Vagina (tissue), 2 donors: ENCODE measurements at regions of chr1 and their contacts with region 1.

Region 1: DNA sequence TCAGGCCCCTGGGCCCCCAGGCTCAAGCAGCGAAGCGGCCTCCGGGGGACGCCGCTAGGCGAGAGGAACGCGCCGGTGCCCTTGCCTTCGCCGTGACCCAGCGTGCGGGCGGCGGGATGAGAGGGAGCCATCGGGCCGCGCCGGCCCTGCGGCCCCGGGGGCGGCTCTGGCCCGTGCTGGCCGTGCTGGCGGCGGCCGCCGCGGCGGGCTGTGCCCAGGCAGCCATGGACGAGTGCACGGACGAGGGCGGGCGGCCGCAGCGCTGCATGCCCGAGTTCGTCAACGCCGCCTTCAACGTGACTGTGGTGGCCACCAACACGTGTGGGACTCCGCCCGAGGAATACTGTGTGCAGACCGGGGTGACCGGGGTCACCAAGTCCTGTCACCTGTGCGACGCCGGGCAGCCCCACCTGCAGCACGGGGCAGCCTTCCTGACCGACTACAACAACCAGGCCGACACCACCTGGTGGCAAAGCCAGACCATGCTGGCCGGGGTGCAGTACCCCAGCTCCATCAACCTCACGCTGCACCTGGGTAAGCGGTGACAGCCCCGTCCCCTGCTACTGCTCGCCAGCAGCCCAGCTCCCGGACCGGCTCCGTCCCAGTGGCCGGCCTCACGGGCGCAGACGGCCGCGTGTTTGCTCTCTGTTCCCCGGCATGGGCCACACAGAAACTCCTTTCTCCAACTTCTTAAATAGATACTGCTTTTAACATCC is 539 bp downstream of the LAMC1 start:
- DNase-seq: no peak
- H3K4me3 ChIP-seq: peak overlapping the region; percentile 83 to 98
- H3K27ac ChIP-seq: peak overlapping the region; percentile 100
- H3K4me1 ChIP-seq: peaks cover 33% of the 10 kb centered on the region
- H3K27me3 ChIP-seq: no peaks in the 10 kb centered on the region
- CTCF ChIP-seq: peak in 2 of 3 experiments; percentile 20 to 36
- POLR2A ChIP-seq: no peak

Region 2: GRCh38 chr1:182984621-182985020 is 39.1 kb before region 1 on chr1:
- intact Hi-C with region 1: no loop called
- DNase-seq: no peak
- H3K4me3 ChIP-seq: no peak overlapping the region
- H3K27ac ChIP-seq: no peak overlapping the region
- H3K4me1 ChIP-seq: no peaks in the 10 kb centered on the region
- H3K27me3 ChIP-seq: no peaks in the 10 kb centered on the region
- CTCF ChIP-seq: no peak
- POLR2A ChIP-seq: no peak

Region 3: DNA sequence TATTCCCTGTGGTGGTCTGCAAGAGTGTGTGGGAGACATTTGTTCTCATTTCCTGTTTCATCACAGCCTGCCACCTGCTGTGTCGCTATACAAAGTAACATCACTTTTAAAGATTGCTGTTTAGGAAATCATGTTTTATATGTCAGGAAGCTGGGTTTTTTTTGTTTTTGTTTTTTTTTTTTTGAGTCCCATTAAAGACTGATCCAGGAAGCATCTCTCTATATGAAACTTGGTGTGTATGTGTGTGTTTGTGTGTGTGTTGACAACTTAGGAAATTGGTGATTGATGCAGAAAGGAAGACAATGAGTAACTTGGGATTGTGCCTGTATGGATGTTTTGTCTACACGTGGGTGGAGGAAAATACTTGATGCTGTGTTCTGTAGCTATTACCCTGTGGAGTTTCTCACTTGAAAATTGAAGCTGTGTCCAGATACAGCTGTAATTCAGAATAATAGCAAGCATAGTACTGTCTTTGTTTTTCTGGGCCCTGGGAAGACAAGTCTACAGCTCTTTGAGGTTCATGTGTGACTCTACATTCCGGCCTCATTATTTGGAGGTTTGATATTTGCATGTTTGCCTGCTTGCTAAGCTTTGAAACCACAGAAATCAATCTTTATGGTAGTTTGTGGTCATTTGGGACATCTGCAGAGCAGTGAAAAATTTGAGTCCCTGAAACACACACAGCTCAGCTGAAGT is 47.3 kb after region 1 on chr1:
- intact Hi-C with region 1: loop called (anchors 10 kb)
- DNase-seq: no peak
- H3K4me3 ChIP-seq: no peak overlapping the region
- H3K27ac ChIP-seq: no peak overlapping the region
- H3K4me1 ChIP-seq: peaks cover 68% of the 10 kb centered on the region
- H3K27me3 ChIP-seq: no peaks in the 10 kb centered on the region
- CTCF ChIP-seq: no peak
- POLR2A ChIP-seq: no peak

Region 4: GRCh38 chr1:183139281-183139942 is 115.7 kb after region 1 on chr1:
- intact Hi-C with region 1: loop called (anchors 10 kb)
- DNase-seq: no peak
- H3K4me3 ChIP-seq: no peak overlapping the region
- H3K27ac ChIP-seq: peak overlapping the region; percentile 72
- H3K4me1 ChIP-seq: peaks cover 33% of the 10 kb centered on the region
- H3K27me3 ChIP-seq: no peaks in the 10 kb centered on the region
- CTCF ChIP-seq: no peak
- POLR2A ChIP-seq: no peak

Region 5: GRCh38 chr1:183159960-183160359 is 136.2 kb after region 1 on chr1:
- intact Hi-C with region 1: no loop called
- DNase-seq: peak in 1 of 2 donors; percentile 98
- H3K4me3 ChIP-seq: no peak overlapping the region
- H3K27ac ChIP-seq: no peak overlapping the region
- H3K4me1 ChIP-seq: no peaks in the 10 kb centered on the region
- H3K27me3 ChIP-seq: no peaks in the 10 kb centered on the region
- CTCF ChIP-seq: no peak
- POLR2A ChIP-seq: no peak

Region 6: DNA sequence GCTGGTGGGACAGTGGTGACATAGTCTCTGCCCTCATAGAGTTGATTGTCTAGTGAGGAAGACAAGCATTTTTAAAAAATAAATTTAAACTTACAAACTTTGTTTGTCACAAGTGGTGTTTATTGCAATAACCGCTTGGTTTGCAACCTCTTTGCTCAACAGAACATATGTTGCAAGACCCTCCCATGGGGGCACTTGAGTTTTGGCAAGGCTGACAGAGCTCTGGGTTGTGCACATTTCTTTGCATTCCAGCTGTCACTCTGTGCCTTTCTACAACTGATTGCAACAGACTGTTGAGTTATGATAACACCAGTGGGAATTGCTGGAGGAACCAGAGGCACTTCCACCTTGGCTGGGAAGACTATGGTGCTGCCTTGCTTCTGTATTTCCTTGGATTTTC is 220.7 kb after region 1 on chr1:
- intact Hi-C with region 1: loop called (anchors 2 kb)
- DNase-seq: peak in 1 of 2 donors; percentile 96
- H3K4me3 ChIP-seq: no peak overlapping the region
- H3K27ac ChIP-seq: peak overlapping the region; percentile 63
- H3K4me1 ChIP-seq: peaks cover 4% of the 10 kb centered on the region
- H3K27me3 ChIP-seq: no peaks in the 10 kb centered on the region
- CTCF ChIP-seq: no peak
- POLR2A ChIP-seq: no peak